Activated CD8-positive, alpha-beta T cell treated with anti-CD3 and anti-CD28 coated beads for 36 hours (primary cell): ENCODE measurements at regions of chr13 and their contacts with region 1.

Region 1: DNA sequence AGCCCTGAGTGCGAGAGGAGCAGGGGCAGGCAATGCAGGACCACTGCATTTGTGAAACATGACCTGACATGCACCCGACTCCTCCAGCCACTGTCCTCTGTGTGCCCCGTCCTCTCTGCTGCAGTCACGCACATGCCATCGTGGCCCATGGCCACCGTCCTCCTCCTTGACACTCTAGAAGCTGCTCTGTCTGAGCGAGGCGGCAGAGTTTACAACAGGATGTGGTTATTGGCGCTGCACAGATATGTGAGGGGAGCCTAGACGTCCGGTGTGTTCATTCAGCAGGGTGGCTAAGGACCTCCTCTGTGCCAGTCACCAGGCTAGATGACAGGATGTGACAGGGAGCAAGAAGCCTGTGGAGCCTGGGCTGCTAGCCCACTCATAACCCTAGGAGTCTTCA is 277.8 kb downstream of the FOXO1 start:
- DNase-seq: peak; percentile 94
- ATAC-seq: peak; percentile 98
- H3K4me3 Mint-ChIP-seq: peak overlapping the region; percentile 77
- H3K27ac Mint-ChIP-seq: peak overlapping the region; percentile 95
- H3K4me1 Mint-ChIP-seq: peaks cover 49% of the 10 kb centered on the region
- H3K27me3 Mint-ChIP-seq: no peaks in the 10 kb centered on the region
- CTCF ChIP-seq: no peak

Region 2: DNA sequence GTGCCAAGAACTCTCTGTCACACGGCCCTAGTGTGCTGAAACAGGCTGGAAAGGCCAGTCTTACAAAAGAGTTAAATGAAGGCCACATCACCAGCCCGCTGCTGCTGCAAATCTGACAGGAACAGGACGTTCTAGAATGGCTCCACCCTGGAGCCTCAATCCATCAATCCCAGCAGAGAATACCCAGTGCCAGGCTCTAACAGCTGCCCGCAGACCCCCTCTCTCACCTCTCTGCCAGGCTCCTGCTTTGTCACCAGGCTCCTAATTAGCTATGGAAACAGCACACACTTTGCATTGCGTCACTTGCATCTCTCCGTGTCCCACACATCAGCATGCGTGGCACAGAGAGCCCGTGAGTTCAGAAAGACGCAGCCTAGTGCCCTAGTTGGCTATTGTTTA is 36.2 kb before region 1 on chr13:
- CTCF ChIA-PET with region 1: no interaction called
- POLR2A ChIA-PET with region 1: no interaction called
- intact Hi-C with region 1: no loop called
- DNase-seq: no peak
- ATAC-seq: no peak
- H3K4me3 Mint-ChIP-seq: no peak overlapping the region
- H3K27ac Mint-ChIP-seq: no peak overlapping the region
- H3K4me1 Mint-ChIP-seq: peaks cover 11% of the 10 kb centered on the region
- H3K27me3 Mint-ChIP-seq: no peaks in the 10 kb centered on the region
- CTCF ChIP-seq: no peak

Region 3: DNA sequence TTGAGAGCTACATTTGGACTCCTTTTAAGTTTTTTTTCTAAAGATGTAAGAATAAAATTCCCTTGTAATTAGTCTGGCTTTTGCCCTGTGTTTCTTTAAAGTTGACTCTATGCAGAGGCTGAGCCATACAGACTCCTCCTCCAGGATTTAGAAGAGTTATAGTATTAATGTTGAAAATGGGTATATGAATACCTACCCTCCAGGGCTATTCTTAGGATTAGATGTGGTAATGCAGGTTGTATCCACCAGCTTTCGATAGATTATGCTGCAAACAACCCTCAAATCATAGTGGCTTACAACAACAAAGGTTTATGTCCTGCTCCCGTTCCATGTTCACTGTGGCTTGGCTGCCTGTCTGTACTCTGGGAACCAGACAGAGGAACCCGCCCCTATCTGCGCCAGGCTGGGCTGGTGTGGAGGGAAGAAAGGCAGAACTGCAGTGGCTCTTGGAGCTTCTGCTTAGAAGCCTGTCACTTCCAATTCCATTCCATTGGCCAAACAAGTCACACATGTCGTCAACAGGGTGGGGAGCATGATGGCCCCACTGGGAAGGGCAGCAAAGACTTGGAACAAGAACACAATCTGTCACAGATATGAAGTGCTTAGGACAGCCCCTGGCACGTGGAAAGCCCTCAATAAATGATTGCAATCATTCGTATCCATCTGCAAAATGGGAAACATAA is 13.0 kb before region 1 on chr13:
- CTCF ChIA-PET with region 1: no interaction called
- POLR2A ChIA-PET with region 1: interaction called, 11 read pairs
- intact Hi-C with region 1: no loop called
- DNase-seq: no peak
- ATAC-seq: no peak
- H3K4me3 Mint-ChIP-seq: no peak overlapping the region
- H3K27ac Mint-ChIP-seq: no peak overlapping the region
- H3K4me1 Mint-ChIP-seq: peaks cover 50% of the 10 kb centered on the region
- H3K27me3 Mint-ChIP-seq: no peaks in the 10 kb centered on the region
- CTCF ChIP-seq: no peak

Region 4: DNA sequence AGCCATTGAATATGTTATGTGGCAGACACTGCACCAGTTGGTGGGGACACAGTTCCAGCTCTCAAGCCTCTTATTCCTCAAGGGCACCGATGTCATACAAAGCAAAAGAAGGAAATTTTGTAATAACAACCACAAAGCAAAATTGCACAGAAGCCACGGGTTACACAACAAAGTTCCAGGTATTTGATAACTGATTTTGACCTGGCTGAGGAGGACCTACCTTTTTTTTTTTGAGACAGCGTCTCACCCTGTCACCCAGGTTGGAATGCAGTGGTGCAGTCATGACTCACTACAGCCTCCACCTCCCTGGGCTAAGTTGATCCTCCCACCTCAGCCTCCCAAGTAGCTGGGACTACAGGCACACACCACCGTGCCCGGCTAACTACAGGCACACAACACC is 11.2 kb after region 1 on chr13:
- CTCF ChIA-PET with region 1: no interaction called
- POLR2A ChIA-PET with region 1: no interaction called
- intact Hi-C with region 1: no loop called
- DNase-seq: no peak
- ATAC-seq: no peak
- H3K4me3 Mint-ChIP-seq: no peak overlapping the region
- H3K27ac Mint-ChIP-seq: no peak overlapping the region
- H3K4me1 Mint-ChIP-seq: peaks cover 35% of the 10 kb centered on the region
- H3K27me3 Mint-ChIP-seq: no peaks in the 10 kb centered on the region
- CTCF ChIP-seq: no peak

Region 5: DNA sequence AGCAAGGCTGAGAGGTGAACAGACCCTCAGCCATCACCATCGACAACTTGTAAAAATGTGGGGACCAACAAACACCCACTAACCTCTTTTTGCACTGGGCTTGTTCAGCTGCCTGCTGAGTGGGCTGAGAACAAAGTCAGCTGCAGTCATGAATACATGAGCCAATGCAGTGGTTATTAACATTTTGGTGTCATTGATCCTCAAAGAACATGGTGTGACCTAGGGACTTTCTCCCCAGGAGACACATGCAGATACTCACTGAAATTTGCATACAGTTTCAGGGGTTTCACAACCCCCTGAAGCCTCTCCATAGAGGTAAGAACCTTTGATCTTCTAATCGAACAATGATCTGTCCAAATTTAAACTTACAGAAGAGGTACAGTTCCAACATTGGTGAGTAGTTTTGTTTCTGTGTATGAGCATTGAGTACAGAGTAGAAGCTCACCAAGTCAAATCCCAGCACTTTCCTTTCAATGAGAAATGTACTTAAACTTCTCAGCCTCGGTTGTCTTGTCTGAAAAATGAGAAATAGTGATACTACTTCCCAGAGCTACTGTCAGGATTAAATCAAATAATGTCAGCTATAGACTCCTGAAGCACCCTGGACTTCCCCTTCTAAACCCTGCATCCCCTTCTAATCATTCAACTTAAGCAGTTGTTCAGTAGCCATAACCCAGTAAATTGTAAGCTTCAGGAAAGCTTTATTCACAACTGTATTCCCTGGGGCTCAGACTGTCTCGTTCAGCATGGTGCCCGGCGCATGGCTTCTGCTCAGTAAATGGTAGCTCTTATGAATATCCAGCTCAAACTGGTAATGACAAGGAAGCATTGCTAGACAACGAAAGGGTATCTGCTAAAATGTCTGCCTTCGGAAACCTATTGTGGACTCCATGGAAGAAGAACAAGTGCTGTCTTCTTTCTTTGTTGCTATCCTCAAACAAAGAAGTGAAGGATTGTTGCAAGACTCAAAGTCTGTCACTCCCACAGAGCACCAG is 129.2 kb after region 1 on chr13:
- CTCF ChIA-PET with region 1: no interaction called
- POLR2A ChIA-PET with region 1: interaction called, 9 read pairs
- intact Hi-C with region 1: loop called (anchors 5 kb)
- DNase-seq: peak; percentile 66
- ATAC-seq: peak; percentile 80
- H3K4me3 Mint-ChIP-seq: peak overlapping the region; percentile 57
- H3K27ac Mint-ChIP-seq: peak overlapping the region; percentile 89
- H3K4me1 Mint-ChIP-seq: peaks cover 77% of the 10 kb centered on the region
- H3K27me3 Mint-ChIP-seq: no peaks in the 10 kb centered on the region
- CTCF ChIP-seq: no peak

Region 6: GRCh38 chr13:40613192-40613818 is 224.7 kb after region 1 on chr13:
- CTCF ChIA-PET with region 1: no interaction called
- POLR2A ChIA-PET with region 1: no interaction called
- intact Hi-C with region 1: loop called (anchors 10 kb)
- DNase-seq: peak; percentile 73
- ATAC-seq: peak; percentile 90
- H3K4me3 Mint-ChIP-seq: peak overlapping the region; percentile 75
- H3K27ac Mint-ChIP-seq: peak overlapping the region; percentile 96
- H3K4me1 Mint-ChIP-seq: peaks cover 93% of the 10 kb centered on the region
- H3K27me3 Mint-ChIP-seq: no peaks in the 10 kb centered on the region
- CTCF ChIP-seq: no peak